Activated naive CD4-positive, alpha-beta T cell treated with anti-CD3 and anti-CD28 coated beads, Interleukin-2, amount 10 ng/mL, durations not matched to agents 7 days and 5 days (primary cell): ENCODE measurements at regions of chrX and their contacts with region 1.

Region 1: DNA sequence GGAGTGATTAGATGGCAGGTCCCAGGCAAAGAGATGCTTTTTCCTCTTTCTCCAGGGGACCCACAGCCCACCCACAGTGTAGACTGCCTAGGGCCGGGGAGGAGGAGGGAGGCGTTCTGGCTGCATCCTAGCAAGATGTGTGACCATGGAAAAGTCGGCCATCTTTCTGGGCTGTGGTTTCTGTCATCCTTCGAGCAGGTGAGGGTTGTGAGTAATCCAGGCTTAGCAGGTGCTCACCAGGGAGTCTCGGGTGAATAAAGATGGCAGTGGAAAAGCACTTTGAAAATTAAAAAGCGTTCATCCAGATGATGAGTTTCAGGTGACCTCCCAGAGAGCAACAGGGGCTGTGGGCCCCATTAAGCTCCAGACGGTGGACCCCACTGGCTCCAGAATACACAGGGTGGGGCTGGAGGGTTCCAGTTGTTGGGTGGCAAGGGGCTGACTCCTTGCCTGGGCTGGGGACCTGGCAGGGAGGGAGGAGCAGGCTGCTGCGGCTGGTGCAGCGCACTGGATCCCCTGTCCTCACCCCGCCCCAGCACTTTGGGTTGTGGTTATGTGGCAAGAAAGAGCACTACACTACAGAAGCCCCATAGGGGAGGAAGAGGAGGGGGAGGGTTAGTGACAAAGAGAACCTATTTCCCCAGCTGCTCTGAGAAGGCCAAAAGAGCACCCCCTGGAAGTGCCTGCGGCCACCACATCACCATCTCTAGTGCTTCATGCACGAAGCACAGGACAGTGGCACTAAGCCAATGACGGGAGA is 23.7 kb downstream of the ELF4 start:
- DNase-seq: peak; percentile 83
- H3K4me3 Mint-ChIP-seq: peak overlapping the region; percentile 81
- H3K27ac Mint-ChIP-seq: peak overlapping the region; percentile 92
- H3K4me1 Mint-ChIP-seq: peaks cover 82% of the 10 kb centered on the region
- H3K27me3 Mint-ChIP-seq: peaks cover 4% of the 10 kb centered on the region

Region 2: GRCh38 chrX:130120746-130121504 is 34.3 kb after region 1 on chrX:
- CTCF ChIA-PET with region 1: interaction called, 68 read pairs
- DNase-seq: peak; percentile 69
- H3K4me3 Mint-ChIP-seq: peak overlapping the region; percentile 53
- H3K27ac Mint-ChIP-seq: no peak overlapping the region
- H3K4me1 Mint-ChIP-seq: peaks cover 18% of the 10 kb centered on the region
- H3K27me3 Mint-ChIP-seq: no peaks in the 10 kb centered on the region